ENCODE measurements at regions of chr6 and their contacts with region 1.

Region 1: GRCh38 chr6:100160912-100161311 is 166.9 kb upstream of the MCHR2 start:
- DNase-seq: no peak
- H3K4me3 ChIP-seq: no peak overlapping the region
- H3K4me3 Mint-ChIP-seq: no peak overlapping the region
- H3K27ac Mint-ChIP-seq: no peak overlapping the region
- H3K4me1 ChIP-seq: no peaks in the 10 kb centered on the region
- H3K4me1 Mint-ChIP-seq: no peaks in the 10 kb centered on the region
- H3K27me3 ChIP-seq: no peaks in the 10 kb centered on the region
- H3K27me3 Mint-ChIP-seq: no peaks in the 10 kb centered on the region
- CTCF ChIP-seq: no peak

Region 2: GRCh38 chr6:100184473-100184872 is 23.6 kb after region 1 on chr6:
- CTCF ChIA-PET with region 1: no interaction called
- POLR2A ChIA-PET with region 1: no interaction called
- intact Hi-C with region 1: loop called (anchors 1 kb)
- DNase-seq: no peak
- H3K4me3 ChIP-seq: no peak overlapping the region
- H3K4me3 Mint-ChIP-seq: no peak overlapping the region
- H3K27ac Mint-ChIP-seq: no peak overlapping the region
- H3K4me1 ChIP-seq: no peaks in the 10 kb centered on the region
- H3K4me1 Mint-ChIP-seq: no peaks in the 10 kb centered on the region
- H3K27me3 ChIP-seq: no peaks in the 10 kb centered on the region
- H3K27me3 Mint-ChIP-seq: no peaks in the 10 kb centered on the region
- CTCF ChIP-seq: no peak

Measured in Caco-2 (cell line).